ENCODE measurements at regions of chr4 and their contacts with region 1.

Region 1: DNA sequence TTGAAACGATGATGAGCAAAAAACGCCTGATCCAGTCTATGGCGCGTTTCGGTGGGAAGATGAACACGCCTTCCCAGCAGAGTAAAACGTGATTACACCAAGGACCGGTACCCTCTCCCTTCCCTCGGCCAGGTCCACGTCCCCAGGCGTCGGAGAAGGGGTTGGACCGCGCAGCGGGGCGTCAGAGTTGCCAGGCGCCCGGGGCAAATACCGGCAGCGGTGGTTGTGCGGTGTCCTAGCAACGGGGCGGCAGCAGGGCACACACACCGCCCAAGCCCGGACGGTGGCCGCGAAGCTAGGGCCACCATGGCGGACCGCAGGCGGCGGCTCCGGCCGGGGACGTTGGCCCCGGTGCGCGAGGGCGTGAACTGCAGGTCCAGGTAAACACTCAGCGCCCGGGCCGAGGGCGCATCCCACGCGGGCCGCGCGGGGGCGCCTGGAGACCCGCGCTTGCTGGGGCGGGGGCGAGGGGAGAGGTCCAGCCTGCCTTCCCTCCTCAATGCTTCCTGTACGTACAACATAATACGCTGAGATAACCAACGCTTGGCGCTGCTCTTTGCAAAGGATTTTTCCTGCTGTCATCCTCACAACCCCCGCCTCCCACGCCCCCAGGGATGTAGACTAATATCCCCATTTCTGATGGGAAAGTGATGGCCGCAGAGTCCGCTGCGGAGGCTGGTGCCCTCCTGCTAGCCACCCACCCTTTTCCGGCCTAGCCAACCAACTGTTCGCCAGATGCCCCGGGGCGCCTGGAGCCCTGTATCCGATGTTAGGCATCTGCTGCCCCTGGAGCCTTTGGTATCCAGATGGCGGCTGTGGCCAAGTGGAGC is at the start of gene FAM47E:
- DNase-seq: peak; percentile 72
- H3K4me3 ChIP-seq: peak within 1 kb of the TSS; percentile 57 to 66
- H3K27ac ChIP-seq: peak within 1 kb of the TSS; percentile 48 to 58
- H3K4me1 ChIP-seq: no peaks in the 10 kb centered on the region
- H3K27me3 ChIP-seq: no peaks in the 10 kb centered on the region
- CTCF ChIP-seq: peak in 3 of 4 experiments; percentile 32 to 62 (median 34)
- POLR2A ChIP-seq: peak; percentile 37
- total RNA-seq, gene FAM47E: 12.3 to 15.1 TPM

Region 2: GRCh38 chr4:76179398-76180318 is 72.0 kb before region 1 on chr4:
- intact Hi-C with region 1: loop called (anchors 5 kb)
- DNase-seq: peak; percentile 86
- H3K4me3 ChIP-seq: no peak overlapping the region
- H3K27ac ChIP-seq: no peak overlapping the region
- H3K4me1 ChIP-seq: no peaks in the 10 kb centered on the region
- H3K27me3 ChIP-seq: no peaks in the 10 kb centered on the region
- CTCF ChIP-seq: peak; percentile 81 to 97 (median 88)
- POLR2A ChIP-seq: no peak

Region 3: GRCh38 chr4:76213415-76214176 is 38.1 kb before region 1 on chr4 and contains the start of gene SCARB2:
- intact Hi-C with region 1: loop called (anchors 5 kb)
- DNase-seq: peak; percentile 86
- H3K4me3 ChIP-seq: peak within 1 kb of the TSS; percentile 83 to 87
- H3K27ac ChIP-seq: peak within 1 kb of the TSS; percentile 96
- H3K4me1 ChIP-seq: peaks cover 20% of the 10 kb centered on the region
- H3K27me3 ChIP-seq: no peaks in the 10 kb centered on the region
- CTCF ChIP-seq: peak in 2 of 4 experiments; percentile 19 to 20
- POLR2A ChIP-seq: peak; percentile 87
- total RNA-seq, gene SCARB2: 169 to 392 TPM

Region 4: GRCh38 chr4:76410636-76411035 is 159.0 kb after region 1 on chr4:
- intact Hi-C with region 1: loop called (anchors 10 kb)
- DNase-seq: no peak
- H3K4me3 ChIP-seq: no peak overlapping the region
- H3K27ac ChIP-seq: no peak overlapping the region
- H3K4me1 ChIP-seq: no peaks in the 10 kb centered on the region
- H3K27me3 ChIP-seq: no peaks in the 10 kb centered on the region
- CTCF ChIP-seq: no peak
- POLR2A ChIP-seq: no peak

Measured in prostate gland (tissue), 2 donors.